HEK293 (cell line): ENCODE measurements at regions of chrX and their contacts with region 1.

Region 1: DNA sequence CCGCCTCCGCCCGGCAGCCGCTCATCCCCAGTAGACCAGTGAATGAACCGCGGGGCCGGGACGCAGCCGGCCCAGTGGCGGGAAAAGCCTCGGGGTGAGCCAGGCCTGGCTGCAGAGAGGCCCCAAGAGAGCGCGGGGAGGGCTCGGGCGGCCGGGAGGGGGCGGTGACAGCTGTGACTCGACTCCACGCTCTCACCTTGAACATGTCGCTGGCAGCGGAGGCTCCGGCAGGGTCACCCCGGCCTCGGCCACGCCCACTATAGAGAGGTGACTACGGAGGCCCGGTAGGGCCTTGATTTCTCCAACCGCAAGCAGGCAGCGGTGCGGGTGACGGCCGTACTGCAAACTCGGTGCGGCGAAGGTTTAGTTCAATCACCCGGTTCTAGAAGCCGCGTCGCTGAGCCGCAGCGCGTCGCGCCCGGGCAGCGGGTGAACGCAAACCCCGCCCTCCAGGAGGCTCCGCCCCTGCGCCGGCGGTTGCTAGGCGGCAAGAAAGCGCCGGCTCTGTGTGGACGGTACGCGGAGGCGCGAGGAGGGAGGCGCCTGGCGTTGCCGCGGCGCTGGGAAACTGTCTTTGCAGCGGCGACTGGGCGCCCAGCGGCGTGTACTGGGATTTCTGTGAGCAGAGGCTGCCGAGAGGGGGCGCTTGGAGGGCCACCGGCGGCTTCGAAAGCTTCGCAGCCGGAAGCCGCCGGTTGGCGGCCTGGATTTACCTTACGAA is at the starts of genes APOO and CXorf58:
- H3K4me3 ChIP-seq: peak within 1 kb of the TSS; percentile 58
- H3K27ac ChIP-seq: peak within 1 kb of the TSS; percentile 88
- H3K4me1 ChIP-seq: 0 out of 2 replicates have a peak, but pooled peaks cover 3% of the 10 kb centered on the region
- CTCF ChIP-seq: peak; percentile 89

Region 2: GRCh38 chrX:23637187-23637586 is 270.5 kb before region 1 on chrX:
- CTCF ChIA-PET with region 1: no interaction called
- POLR2A ChIA-PET with region 1: no interaction called
- H3K4me3 ChIP-seq: no peak overlapping the region
- H3K27ac ChIP-seq: no peak overlapping the region
- H3K4me1 ChIP-seq: no peaks in the 10 kb centered on the region
- CTCF ChIP-seq: no peak

Region 3: GRCh38 chrX:23993012-23993633 is 85.5 kb after region 1 on chrX:
- CTCF ChIA-PET with region 1: interaction called, 11 read pairs
- POLR2A ChIA-PET with region 1: no interaction called
- H3K4me3 ChIP-seq: no peak overlapping the region
- H3K27ac ChIP-seq: no peak overlapping the region
- H3K4me1 ChIP-seq: no peaks in the 10 kb centered on the region
- CTCF ChIP-seq: no peak